ENCODE measurements at regions of chr9 and their contacts with region 1.

Region 1: GRCh38 chr9:86637515-86637914 is 283.3 kb upstream of the TUT7 start:
- DNase-seq: no peak
- ATAC-seq: peak; percentile 21; the same call in 1 of the 3 replicates
- H3K4me3 ChIP-seq: no peak overlapping the region
- H3K27ac ChIP-seq: no peak overlapping the region
- H3K4me1 ChIP-seq: no peaks in the 10 kb centered on the region
- H3K27me3 ChIP-seq: no peaks in the 10 kb centered on the region
- CTCF ChIP-seq: peak; percentile 39 to 51 (median 49); a peak in 5 of 6 replicates
- EP300 ChIP-seq: no peak
- POLR2A ChIP-seq: no peak
- RAD21 ChIP-seq: peak; percentile 14; the same call in 1 of the 2 replicates

Region 2: DNA sequence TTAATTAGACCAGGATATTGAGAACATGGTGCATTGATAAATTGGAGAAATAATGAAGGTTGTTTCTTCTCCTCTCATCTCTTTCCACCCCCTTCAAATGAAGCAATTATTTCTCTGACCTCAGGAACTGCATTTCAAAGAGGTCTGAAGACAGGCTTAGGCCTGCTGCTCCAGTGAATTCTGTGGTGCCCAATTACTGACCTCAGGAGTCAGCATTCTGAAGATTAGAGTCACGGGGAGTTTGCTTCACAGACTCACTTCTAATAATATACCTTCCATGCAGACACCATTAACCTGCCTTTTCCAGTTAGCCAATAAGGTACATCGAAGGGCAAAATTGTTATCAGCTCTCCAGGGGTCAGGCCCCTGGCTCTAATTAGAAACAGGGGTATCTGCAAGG is 38.9 kb after region 1 on chr9:
- CTCF ChIA-PET with region 1: interaction called, 3 read pairs
- POLR2A ChIA-PET with region 1: no interaction called
- RAD21 ChIA-PET with region 1: no interaction called
- SMC1A ChIA-PET with region 1: no interaction called
- in situ Hi-C with region 1: loop called (anchors 5 kb)
- intact Hi-C with region 1: no loop called
- DNase-seq: no peak
- ATAC-seq: no peak
- H3K4me3 ChIP-seq: no peak overlapping the region
- H3K27ac ChIP-seq: no peak overlapping the region
- H3K4me1 ChIP-seq: no peaks in the 10 kb centered on the region
- H3K27me3 ChIP-seq: no peaks in the 10 kb centered on the region; a peak in 1 of 4 replicates
- CTCF ChIP-seq: no peak
- EP300 ChIP-seq: no peak
- POLR2A ChIP-seq: no peak
- RAD21 ChIP-seq: no peak